ENCODE measurements at regions of chr4 and their contacts with region 1.

Region 1: GRCh38 chr4:163332500-163333406 is at the start of gene NPY1R:
- DNase-seq: peak; percentile 80 to 89
- ATAC-seq: peak; percentile 94
- H3K4me3 ChIP-seq: peak within 1 kb of the TSS; percentile 21 to 97
- H3K27ac ChIP-seq: peak within 1 kb of the TSS; percentile 52 to 80
- H3K4me1 ChIP-seq: peaks cover 0 to 2% of the 10 kb centered on the region in 2 donors
- H3K27me3 ChIP-seq: no peaks in the 10 kb centered on the region
- total RNA-seq, gene NPY1R: 40.2 to 56.4 TPM

Region 2: GRCh38 chr4:162140051-162140683 is 1192.6 kb before region 1 on chr4:
- intact Hi-C with region 1: no loop called
- DNase-seq: no peak
- ATAC-seq: no peak
- H3K4me3 ChIP-seq: no peak overlapping the region
- H3K27ac ChIP-seq: no peak overlapping the region
- H3K4me1 ChIP-seq: no peaks in the 10 kb centered on the region
- H3K27me3 ChIP-seq: no peaks in the 10 kb centered on the region

Region 3: GRCh38 chr4:162497564-162498167 is 835.1 kb before region 1 on chr4:
- intact Hi-C with region 1: loop called (anchors 5 kb)
- DNase-seq: no peak
- ATAC-seq: peak; percentile 88
- H3K4me3 ChIP-seq: no peak overlapping the region
- H3K27ac ChIP-seq: no peak overlapping the region
- H3K4me1 ChIP-seq: no peaks in the 10 kb centered on the region
- H3K27me3 ChIP-seq: no peaks in the 10 kb centered on the region

Region 4: GRCh38 chr4:162645381-162645780 is 687.4 kb before region 1 on chr4:
- intact Hi-C with region 1: loop called (anchors 5 to 10 kb)
- DNase-seq: no peak
- ATAC-seq: no peak
- H3K4me3 ChIP-seq: no peak overlapping the region
- H3K27ac ChIP-seq: no peak overlapping the region
- H3K4me1 ChIP-seq: no peaks in the 10 kb centered on the region
- H3K27me3 ChIP-seq: no peaks in the 10 kb centered on the region

Region 5: DNA sequence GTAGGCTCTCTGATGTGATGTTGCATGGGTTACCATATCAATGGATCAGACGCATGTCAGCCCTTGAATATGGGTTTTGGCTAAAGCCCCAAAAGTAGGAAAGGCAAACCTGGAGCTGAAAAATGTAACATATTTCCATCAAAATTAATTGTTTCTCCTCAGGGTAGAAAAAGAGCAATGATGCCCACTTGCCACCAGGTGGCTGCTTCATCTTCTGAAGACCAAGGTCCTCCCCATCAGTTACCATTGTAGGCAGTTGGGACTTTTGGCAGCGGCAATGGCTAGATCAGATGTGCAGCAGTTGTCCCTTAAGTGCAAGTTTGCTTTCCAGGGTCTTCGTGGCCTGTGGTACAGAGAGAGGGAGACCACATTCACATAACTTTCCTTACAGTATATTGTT is 284.3 kb before region 1 on chr4:
- intact Hi-C with region 1: loop called in 1 of 2 experiments (anchors 5 kb)
- DNase-seq: no peak
- ATAC-seq: no peak
- H3K4me3 ChIP-seq: no peak overlapping the region
- H3K27ac ChIP-seq: no peak overlapping the region
- H3K4me1 ChIP-seq: no peaks in the 10 kb centered on the region
- H3K27me3 ChIP-seq: no peaks in the 10 kb centered on the region

Region 6: DNA sequence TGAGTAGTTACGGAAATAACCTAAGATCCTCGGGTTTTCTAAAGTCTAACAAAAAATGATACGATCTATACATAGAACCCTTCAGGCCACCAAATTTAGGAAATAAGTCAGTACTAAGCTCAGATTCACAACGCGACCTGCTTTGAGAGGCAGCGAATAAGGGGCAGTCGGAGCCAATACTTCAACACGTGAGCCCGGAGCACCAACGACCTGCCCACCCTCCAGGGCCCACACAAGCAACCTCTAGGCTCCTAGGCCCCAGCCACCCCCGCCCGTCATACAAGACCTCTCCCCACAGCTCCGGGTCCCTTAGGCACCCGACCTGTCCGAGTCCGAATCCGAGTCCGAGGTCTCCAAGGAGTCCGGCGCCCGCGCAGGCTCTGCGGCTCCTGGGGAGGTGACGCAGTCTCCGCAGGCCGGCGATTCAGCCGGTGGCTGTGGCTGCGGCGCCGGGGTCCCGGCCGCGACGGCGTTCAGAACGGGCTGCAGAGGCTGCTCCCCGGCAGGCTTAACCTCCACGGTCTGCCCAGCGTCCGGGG is 166.6 kb before region 1 on chr4:
- intact Hi-C with region 1: loop called in 1 of 2 experiments (anchors 10 kb)
- DNase-seq: peak; percentile 67 to 85
- ATAC-seq: peak; percentile 85
- H3K4me3 ChIP-seq: peak overlapping the region; percentile 58 to 73
- H3K27ac ChIP-seq: peak overlapping the region; percentile 71 to 90
- H3K4me1 ChIP-seq: peaks cover 0 to 6% of the 10 kb centered on the region in 2 donors
- H3K27me3 ChIP-seq: no peaks in the 10 kb centered on the region

Region 7: GRCh38 chr4:163494360-163495162 is 161.8 kb after region 1 on chr4 and contains the start of gene TMA16:
- intact Hi-C with region 1: loop called in 1 of 2 experiments (anchors 10 kb)
- DNase-seq: peak; percentile 93 to 95
- ATAC-seq: peak; percentile 96
- H3K4me3 ChIP-seq: peak within 1 kb of the TSS; percentile 84 to 85
- H3K27ac ChIP-seq: peak within 1 kb of the TSS in 1 of 2 donors; percentile 71
- H3K4me1 ChIP-seq: no peaks in the 10 kb centered on the region
- H3K27me3 ChIP-seq: no peaks in the 10 kb centered on the region
- total RNA-seq, gene TMA16: 26.2 to 27.3 TPM

Region 8: GRCh38 chr4:163544407-163545038 is 211.8 kb after region 1 on chr4:
- intact Hi-C with region 1: loop called in 1 of 2 experiments (anchors 5 kb)
- DNase-seq: peak; percentile 70 to 86
- ATAC-seq: peak; percentile 86
- H3K4me3 ChIP-seq: no peak overlapping the region
- H3K27ac ChIP-seq: no peak overlapping the region
- H3K4me1 ChIP-seq: no peaks in the 10 kb centered on the region
- H3K27me3 ChIP-seq: no peaks in the 10 kb centered on the region